Activated CD4-positive, alpha-beta memory T cell treated with anti-CD3 and anti-CD28 coated beads for 36 hours (primary cell): ENCODE measurements at regions of chr11 and their contacts with region 1.

Region 1: DNA sequence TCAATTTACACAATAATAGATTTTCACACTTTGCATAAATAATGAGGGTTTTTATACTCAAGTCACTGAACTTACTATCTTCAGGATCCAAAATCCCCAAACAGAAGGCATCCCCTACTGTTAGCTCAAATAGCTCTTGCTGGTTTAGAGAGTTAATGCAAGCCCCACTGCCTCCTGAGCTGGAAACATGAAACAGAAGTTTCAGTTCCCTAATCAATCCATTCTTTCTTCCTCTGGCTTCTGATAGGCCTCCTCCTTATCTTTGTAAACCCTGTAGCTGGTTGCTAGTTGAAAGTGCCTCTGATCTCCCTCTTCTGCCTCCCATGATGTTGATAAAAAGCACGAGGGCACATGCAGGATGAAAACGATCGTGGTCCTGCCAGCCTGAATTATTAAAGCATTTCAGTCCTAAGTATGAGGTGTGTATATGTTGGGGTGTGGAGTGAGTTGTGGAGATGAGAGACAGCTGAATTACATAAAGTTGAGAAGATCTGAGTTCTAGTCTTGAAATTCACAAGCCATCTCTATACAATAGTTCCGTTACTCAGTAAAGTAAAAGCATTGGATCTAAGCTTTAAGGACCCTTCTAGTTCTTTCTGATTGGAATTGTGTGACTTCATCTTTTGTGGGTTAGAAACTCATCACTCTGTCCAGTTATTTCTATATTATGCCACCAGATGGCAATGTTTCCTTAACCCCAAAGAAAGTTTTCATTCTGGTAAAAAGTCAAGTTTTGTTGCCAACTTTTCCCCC is 35.0 kb upstream of the EHF start:
- DNase-seq: no peak
- H3K4me3 Mint-ChIP-seq: no peak overlapping the region
- H3K27ac Mint-ChIP-seq: no peak overlapping the region
- H3K4me1 Mint-ChIP-seq: no peaks in the 10 kb centered on the region
- H3K27me3 Mint-ChIP-seq: peaks cover 14% of the 10 kb centered on the region

Region 2: DNA sequence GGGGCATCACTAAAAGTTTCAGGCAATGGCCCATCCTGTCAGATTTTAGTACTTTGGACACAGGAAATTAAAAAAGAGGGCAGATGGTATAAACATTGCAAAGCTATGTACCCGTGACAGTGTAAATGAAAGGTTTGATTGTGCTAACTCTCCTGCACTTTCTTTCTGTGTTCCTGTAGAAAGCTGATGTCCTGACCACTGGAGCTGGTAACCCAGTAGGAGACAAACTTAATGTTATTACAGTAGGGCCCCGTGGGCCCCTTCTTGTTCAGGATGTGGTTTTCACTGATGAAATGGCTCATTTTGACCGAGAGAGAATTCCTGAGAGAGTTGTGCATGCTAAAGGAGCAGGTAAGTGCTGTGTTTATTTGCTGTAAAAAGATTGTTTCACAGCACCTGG is 136.9 kb before region 1 on chr11:
- CTCF ChIA-PET with region 1: no interaction called
- POLR2A ChIA-PET with region 1: no interaction called
- intact Hi-C with region 1: no loop called
- DNase-seq: peak; percentile 40
- H3K4me3 Mint-ChIP-seq: no peak overlapping the region
- H3K27ac Mint-ChIP-seq: peak overlapping the region; percentile 24
- H3K4me1 Mint-ChIP-seq: peaks cover 22% of the 10 kb centered on the region
- H3K27me3 Mint-ChIP-seq: no peaks in the 10 kb centered on the region

Region 3: GRCh38 chr11:34512840-34513681 is 72.8 kb before region 1 on chr11:
- CTCF ChIA-PET with region 1: interaction called, 6 read pairs
- POLR2A ChIA-PET with region 1: no interaction called
- intact Hi-C with region 1: loop called (anchors 10 kb)
- DNase-seq: peak; percentile 71
- H3K4me3 Mint-ChIP-seq: no peak overlapping the region
- H3K27ac Mint-ChIP-seq: no peak overlapping the region
- H3K4me1 Mint-ChIP-seq: no peaks in the 10 kb centered on the region
- H3K27me3 Mint-ChIP-seq: no peaks in the 10 kb centered on the region

Region 4: DNA sequence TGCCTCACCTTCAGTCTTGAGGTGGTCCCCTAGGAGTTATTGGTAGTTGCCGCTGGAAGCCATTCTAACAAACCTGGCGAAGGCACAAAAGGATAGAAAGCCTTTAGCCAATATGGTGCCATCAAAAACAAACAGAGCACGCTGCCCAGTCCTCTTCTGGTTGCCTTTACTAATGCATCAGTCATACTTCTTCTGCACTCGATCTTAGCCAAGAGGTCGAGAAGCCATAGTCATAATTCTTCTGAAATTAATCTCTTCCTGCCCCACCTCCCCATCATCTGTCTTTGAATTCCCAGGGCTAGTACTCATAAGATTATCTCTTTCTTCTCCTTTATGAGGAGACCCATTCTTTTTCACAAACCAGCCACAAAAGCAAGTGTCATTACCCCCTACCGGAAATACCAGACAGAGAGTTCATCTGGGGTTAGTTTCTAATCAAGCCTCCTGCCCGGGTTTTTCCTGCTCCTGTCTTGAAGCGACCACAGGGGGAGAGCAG is 13.5 kb after region 1 on chr11:
- CTCF ChIA-PET with region 1: interaction called, 15 read pairs
- POLR2A ChIA-PET with region 1: no interaction called
- intact Hi-C with region 1: no loop called
- DNase-seq: no peak
- H3K4me3 Mint-ChIP-seq: no peak overlapping the region
- H3K27ac Mint-ChIP-seq: no peak overlapping the region
- H3K4me1 Mint-ChIP-seq: peaks cover 16% of the 10 kb centered on the region
- H3K27me3 Mint-ChIP-seq: peaks cover 1% of the 10 kb centered on the region

Region 5: GRCh38 chr11:34890812-34891211 is 304.9 kb after region 1 on chr11:
- CTCF ChIA-PET with region 1: interaction called, 38 read pairs
- POLR2A ChIA-PET with region 1: no interaction called
- intact Hi-C with region 1: loop called (anchors 1 kb)
- DNase-seq: no peak
- H3K4me3 Mint-ChIP-seq: no peak overlapping the region
- H3K27ac Mint-ChIP-seq: no peak overlapping the region
- H3K4me1 Mint-ChIP-seq: no peaks in the 10 kb centered on the region
- H3K27me3 Mint-ChIP-seq: no peaks in the 10 kb centered on the region

Region 6: GRCh38 chr11:35246745-35247144 is 660.8 kb after region 1 on chr11:
- CTCF ChIA-PET with region 1: no interaction called
- POLR2A ChIA-PET with region 1: no interaction called
- intact Hi-C with region 1: loop called (anchors 5 kb)
- DNase-seq: no peak
- H3K4me3 Mint-ChIP-seq: no peak overlapping the region
- H3K27ac Mint-ChIP-seq: peak overlapping the region; percentile 6
- H3K4me1 Mint-ChIP-seq: peaks cover 50% of the 10 kb centered on the region
- H3K27me3 Mint-ChIP-seq: no peaks in the 10 kb centered on the region